ENCODE measurements at regions of chr18 and their contacts with region 1.

Region 1: DNA sequence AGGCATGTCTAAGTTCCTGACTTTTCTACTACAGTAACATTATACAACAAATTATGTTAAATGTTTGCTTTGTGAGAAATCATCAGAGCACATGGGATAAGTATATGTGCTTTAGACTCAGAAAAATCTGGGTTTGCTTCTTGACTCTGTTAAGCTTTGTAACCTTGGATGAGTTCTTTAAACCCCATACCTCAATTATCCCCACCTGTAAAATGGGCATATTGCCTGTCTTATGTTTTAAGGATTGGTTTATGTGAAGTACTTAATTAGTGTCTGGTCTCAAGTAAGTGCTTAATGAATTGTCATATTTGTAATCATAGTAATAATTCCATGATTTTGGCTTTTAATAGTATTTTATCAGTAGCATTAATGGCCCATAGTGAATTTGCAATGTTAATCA is 135.8 kb downstream of the TAF4B start:
- DNase-seq: no peak
- ATAC-seq: no peak
- H3K4me3 Mint-ChIP-seq: no peak overlapping the region
- H3K27ac Mint-ChIP-seq: no peak overlapping the region
- H3K4me1 Mint-ChIP-seq: no peaks in the 10 kb centered on the region
- H3K27me3 Mint-ChIP-seq: no peaks in the 10 kb centered on the region
- CTCF ChIP-seq: no peak

Region 2: DNA sequence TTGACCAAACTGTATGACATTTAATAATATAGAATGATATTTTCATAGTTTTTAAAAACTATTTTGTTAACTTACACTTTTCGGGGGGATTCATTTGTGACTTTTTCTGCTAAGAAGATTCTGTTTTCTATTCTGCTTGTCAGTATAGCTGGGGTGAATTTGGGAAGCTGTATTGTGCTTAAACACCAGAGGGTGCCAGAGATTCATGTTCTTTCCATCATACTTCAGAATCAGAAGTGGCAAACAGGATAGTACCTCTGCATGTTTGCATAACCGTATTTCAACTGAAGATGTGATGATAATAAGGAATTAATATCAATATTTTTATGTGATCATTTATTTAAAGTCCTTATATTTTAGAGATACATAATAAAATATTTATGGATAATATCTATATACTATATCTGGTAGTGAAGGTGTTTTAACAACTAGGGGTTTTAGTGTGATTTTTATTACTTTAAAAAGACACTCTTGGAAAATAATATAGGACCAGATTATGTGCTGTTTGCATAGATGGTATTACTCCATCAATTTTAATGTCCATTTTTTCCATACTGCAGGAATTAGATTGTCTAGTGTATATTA is 54.7 kb before region 1 on chr18:
- CTCF ChIA-PET with region 1: no interaction called
- POLR2A ChIA-PET with region 1: no interaction called
- intact Hi-C with region 1: loop called (anchors 10 kb)
- DNase-seq: peak; percentile 32
- ATAC-seq: no peak
- H3K4me3 Mint-ChIP-seq: no peak overlapping the region
- H3K27ac Mint-ChIP-seq: no peak overlapping the region
- H3K4me1 Mint-ChIP-seq: peaks cover 2% of the 10 kb centered on the region
- H3K27me3 Mint-ChIP-seq: no peaks in the 10 kb centered on the region
- CTCF ChIP-seq: peak; percentile 57

Region 3: DNA sequence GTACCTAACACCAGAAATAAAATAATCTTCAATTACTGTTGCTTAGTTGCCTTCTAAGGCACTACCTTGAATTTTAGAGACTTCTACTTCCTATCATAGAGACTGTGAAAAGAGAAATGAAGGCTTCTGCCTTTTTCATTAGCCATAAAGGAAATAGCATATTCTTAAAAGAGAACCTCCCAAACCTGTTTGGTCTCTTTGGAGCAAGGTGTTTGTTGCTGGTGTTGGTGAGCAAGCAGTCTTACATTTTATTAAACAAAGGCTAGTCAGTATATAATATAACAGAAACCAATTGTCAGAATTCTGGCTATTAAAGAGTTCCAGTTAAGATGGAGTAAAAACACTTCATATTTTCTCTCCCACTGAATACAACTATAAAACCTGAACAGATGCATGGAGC is 19.4 kb before region 1 on chr18:
- CTCF ChIA-PET with region 1: no interaction called
- POLR2A ChIA-PET with region 1: no interaction called
- intact Hi-C with region 1: no loop called
- DNase-seq: no peak
- ATAC-seq: no peak
- H3K4me3 Mint-ChIP-seq: no peak overlapping the region
- H3K27ac Mint-ChIP-seq: no peak overlapping the region
- H3K4me1 Mint-ChIP-seq: no peaks in the 10 kb centered on the region
- H3K27me3 Mint-ChIP-seq: no peaks in the 10 kb centered on the region
- CTCF ChIP-seq: no peak